ENCODE measurements at regions of chr15 and their contacts with region 1.

Region 1: DNA sequence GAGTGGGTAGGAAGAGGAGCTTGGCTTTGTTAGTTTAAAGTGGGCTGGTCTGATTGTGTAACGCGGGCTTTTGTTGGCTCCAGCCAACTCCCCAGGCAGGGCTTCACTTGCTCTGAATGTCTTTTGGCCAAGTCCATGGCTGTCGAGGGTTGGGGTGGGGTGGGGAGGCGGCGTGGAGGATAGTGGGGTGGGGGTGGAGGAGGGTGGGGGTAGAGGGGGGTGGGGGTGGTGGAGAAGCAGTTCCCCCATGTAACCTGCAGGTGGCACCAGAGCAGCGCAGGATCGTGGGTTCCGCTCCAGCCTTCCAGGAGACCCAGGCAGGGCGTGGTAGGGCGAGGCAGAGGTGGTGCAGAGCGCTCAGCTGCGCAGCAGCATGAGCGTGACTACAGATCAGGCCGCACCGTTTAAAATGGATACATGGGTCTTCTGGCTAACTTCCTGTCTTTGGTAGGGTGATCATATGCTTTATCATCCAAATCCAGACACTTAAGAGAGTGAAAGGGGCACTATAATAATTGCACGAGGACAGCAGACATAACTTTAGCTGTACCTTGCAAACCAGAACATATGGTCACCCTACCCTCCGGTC is 28.3 kb downstream of the GOLGA6A start:
- DNase-seq: peak; percentile 58
- H3K4me3 ChIP-seq: no peak overlapping the region
- H3K27ac ChIP-seq: no peak overlapping the region
- H3K4me1 ChIP-seq: no peaks in the 10 kb centered on the region
- H3K27me3 ChIP-seq: no peaks in the 10 kb centered on the region
- CTCF ChIP-seq: peak; percentile 27 to 66 (median 50)
- POLR2A ChIP-seq: no peak

Region 2: DNA sequence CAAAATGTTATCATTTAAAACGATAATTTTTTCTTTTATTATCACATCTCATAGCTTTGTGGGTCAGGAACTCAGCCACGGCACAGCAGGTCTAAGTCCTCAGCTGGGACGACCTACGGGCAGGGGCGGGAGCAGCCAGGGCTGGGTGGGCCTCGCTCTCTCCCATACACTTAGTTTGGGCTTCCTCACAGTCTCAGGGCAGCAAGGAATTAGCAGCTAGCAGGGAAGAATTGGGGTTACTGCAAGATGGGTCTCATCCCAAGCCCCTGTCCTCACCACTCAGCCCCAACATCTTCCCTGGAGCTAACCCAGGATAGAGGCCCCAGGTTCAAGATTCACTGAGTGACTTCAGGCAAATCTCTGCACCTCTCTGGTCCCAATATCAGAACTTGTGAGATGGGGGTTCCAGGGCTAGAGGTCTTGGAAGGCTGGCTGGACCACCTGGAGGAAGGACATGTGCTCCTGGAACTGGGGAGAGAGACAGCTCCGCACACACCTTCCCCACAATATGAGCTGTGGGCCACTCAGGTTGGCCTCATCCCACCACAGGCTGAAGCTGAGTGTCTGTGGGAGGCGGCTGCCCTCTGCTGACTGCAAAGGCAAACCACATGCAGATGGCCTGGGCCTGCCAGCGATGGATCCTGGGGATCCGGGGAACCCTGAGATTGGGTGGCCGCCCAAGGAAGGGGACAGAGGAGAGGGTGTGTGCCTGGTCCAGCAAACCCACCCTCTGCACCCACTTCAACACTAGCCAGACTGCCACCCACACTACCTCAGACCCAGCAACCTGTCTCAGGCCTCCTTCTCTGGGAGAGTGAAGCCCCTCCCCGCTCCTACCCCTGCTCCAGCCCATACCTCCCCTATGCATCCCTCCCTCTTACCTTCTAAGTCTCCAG is 268.4 kb after region 1 on chr15:
- intact Hi-C with region 1: loop called (anchors 5 kb)
- DNase-seq: peak; percentile 40
- H3K4me3 ChIP-seq: no peak overlapping the region
- H3K27ac ChIP-seq: no peak overlapping the region
- H3K4me1 ChIP-seq: no peaks in the 10 kb centered on the region
- H3K27me3 ChIP-seq: no peaks in the 10 kb centered on the region
- CTCF ChIP-seq: peak; percentile 31 to 85 (median 68)
- POLR2A ChIP-seq: no peak